Activated CD4-positive, alpha-beta T cell treated with anti-CD3 and anti-CD28 coated beads for 36 hours (primary cell): ENCODE measurements at regions of chr3 and their contacts with region 1.

Region 1: DNA sequence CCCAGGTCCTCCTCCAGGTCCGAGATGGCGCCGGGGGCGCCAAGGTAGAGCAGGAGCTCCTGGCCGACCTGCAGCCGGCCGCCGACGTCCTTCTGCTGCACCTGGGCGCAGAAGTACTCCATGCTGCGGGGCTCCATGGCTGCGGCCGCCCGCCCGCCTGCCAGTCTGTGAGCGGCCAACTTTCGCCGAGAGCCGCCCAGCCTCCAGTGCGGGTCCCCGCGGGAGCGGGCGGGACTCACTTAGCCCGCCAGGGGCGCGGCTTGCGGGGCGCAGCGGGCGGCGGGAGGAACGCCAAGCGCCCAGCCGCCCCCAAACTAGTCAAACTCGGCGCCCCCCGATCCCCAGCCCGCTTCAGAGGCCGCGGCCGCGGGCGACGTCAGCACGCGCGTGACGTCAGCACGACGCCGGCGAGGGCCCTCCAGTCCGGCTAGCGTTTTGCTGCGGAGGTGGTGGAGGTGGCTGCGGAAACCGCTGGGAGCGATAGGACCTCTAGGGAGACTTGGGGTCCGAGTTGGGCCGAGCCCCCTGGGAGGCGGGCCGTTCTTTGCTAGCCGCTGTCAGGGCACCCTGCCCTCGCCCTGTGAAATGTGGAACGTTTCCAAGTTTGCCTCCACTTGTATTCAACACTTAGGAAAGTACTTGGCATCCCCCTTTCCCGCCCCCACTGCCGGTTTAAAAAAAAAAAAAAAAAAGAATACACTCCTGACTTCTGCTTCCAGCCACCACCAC is at the start of gene CLASP2:
- DNase-seq: peak; percentile 90
- ATAC-seq: peak; percentile 85
- H3K4me3 Mint-ChIP-seq: no peak within 1 kb of the TSS
- H3K27ac Mint-ChIP-seq: peak within 1 kb of the TSS; percentile 94
- H3K4me1 Mint-ChIP-seq: peaks cover 6% of the 10 kb centered on the region
- H3K27me3 Mint-ChIP-seq: no peaks in the 10 kb centered on the region
- total RNA-seq, gene CLASP2: 45.5 to 68.5 TPM

Region 2: GRCh38 chr3:32960404-32961170 is 757.4 kb before region 1 on chr3:
- CTCF ChIA-PET with region 1: no interaction called
- POLR2A ChIA-PET with region 1: no interaction called
- intact Hi-C with region 1: loop called in 1 of 2 experiments (anchors 10 kb)
- DNase-seq: no peak
- ATAC-seq: peak; percentile 61
- H3K4me3 Mint-ChIP-seq: peak overlapping the region; percentile 8
- H3K27ac Mint-ChIP-seq: peak overlapping the region; percentile 97
- H3K4me1 Mint-ChIP-seq: peaks cover 77% of the 10 kb centered on the region
- H3K27me3 Mint-ChIP-seq: no peaks in the 10 kb centered on the region

Region 3: DNA sequence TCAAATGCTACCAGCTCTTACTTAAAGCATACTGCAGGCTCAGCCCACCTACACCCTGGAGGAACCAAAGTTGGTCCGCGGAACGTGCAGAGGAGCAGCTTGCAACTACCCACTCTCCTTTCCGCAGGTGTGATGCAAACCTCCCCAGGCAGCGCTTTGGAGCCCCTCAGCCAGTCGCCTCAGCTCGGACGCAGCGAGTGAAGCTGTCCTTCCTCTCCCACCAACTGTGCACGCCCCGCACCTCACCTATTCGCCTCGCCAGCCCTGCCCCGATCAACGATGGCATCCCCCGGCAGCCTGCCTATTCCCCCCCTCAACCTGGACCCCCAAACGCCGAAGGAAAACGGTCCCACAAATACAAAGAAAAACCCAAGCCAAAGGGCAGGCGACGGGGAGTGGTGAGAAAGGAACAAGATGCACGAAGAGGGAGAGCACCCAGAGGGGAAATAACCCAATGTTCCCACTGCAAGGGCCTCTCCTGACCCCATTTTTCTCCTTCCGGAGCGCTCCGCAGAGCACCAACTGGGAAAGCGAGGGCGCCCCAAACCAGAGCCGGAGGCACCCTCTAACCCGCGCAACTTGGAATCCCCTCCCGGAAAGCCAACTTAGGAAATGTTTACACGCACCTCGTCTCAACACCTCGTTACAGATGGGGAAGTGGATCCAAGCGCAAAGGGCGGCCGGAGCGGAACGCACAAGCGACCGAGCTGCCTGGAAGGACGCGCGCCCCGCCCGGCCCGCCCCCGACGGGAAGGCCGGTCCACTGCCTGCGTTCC is 621.7 kb before region 1 on chr3:
- CTCF ChIA-PET with region 1: no interaction called
- POLR2A ChIA-PET with region 1: no interaction called
- intact Hi-C with region 1: loop called in 1 of 2 experiments (anchors 5 kb)
- DNase-seq: peak; percentile 66
- ATAC-seq: peak; percentile 46
- H3K4me3 Mint-ChIP-seq: peak overlapping the region; percentile 99
- H3K27ac Mint-ChIP-seq: peak overlapping the region; percentile 92
- H3K4me1 Mint-ChIP-seq: peaks cover 40% of the 10 kb centered on the region
- H3K27me3 Mint-ChIP-seq: no peaks in the 10 kb centered on the region

Region 4: DNA sequence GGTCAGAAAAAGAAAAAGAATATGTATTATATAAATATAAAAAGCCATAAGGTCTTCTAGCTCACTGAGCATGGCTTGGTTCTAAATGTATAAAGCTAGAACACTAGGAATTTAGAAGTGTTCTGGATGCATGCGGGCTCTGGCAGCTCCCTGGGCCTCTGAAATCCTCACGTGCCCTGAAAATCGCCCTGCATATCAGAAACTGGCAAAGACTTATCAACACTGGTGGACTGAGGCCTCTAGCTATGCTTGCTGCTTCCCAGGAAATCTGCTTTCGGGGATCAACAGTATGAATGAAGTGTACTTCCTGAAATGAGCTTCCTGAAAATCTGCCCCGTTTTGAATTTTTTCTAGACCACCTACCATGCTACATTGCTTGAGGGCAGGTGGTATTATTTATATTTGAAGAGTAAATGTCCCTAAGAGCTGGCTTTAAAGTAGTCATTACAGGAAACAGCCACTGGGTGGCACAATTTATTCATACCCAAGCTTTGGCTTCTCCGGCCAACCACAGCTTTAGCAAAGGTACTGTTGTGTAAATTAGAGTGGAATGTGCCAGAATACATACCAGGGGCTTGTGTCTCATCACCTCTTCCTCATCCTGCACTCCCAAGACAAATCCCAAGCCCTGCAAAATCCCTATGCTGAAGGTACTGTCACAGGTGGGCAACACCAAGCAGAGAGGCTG is 586.6 kb before region 1 on chr3:
- CTCF ChIA-PET with region 1: no interaction called
- POLR2A ChIA-PET with region 1: no interaction called
- intact Hi-C with region 1: loop called in 1 of 2 experiments (anchors 5 kb)
- DNase-seq: peak; percentile 54
- ATAC-seq: peak; percentile 63
- H3K4me3 Mint-ChIP-seq: no peak overlapping the region
- H3K27ac Mint-ChIP-seq: no peak overlapping the region
- H3K4me1 Mint-ChIP-seq: peaks cover 10% of the 10 kb centered on the region
- H3K27me3 Mint-ChIP-seq: no peaks in the 10 kb centered on the region

Region 5: DNA sequence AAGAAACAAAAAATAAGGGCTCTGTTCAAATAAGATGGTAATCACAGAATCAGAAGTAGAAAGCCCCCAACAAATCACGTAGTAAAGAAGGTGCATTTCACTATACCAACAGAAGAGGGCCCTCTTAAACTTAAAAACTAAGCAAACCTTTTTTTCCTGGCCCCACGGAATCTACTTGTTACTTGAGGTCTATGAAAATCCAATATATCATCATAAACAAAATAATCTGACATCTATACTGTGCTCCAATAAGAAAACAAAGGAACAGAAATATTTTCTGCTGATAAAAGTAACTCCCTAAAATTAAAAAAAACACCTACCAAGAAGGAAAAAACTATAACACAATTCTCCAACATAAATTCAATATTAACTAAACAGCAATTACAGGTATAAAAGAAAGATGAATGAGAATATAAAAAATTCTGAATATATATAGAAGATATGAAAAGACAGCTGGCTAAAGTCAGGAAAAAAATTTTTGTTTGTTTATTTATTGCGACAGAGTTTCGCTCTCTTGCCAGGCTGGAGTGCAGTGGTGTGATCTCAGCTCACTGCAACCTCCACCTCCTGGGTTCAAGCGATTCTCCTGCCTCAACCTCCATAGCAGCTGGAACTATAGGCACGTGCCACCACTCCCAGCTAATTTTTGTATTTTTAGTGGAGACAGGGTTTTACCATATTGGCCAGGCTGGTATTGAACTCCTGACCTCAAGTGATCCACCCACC is 81.7 kb before region 1 on chr3:
- CTCF ChIA-PET with region 1: interaction called, 6 read pairs
- POLR2A ChIA-PET with region 1: no interaction called
- intact Hi-C with region 1: loop called (anchors 1 kb)
- DNase-seq: no peak
- ATAC-seq: no peak
- H3K4me3 Mint-ChIP-seq: no peak overlapping the region
- H3K27ac Mint-ChIP-seq: no peak overlapping the region
- H3K4me1 Mint-ChIP-seq: no peaks in the 10 kb centered on the region
- H3K27me3 Mint-ChIP-seq: no peaks in the 10 kb centered on the region

Region 6: DNA sequence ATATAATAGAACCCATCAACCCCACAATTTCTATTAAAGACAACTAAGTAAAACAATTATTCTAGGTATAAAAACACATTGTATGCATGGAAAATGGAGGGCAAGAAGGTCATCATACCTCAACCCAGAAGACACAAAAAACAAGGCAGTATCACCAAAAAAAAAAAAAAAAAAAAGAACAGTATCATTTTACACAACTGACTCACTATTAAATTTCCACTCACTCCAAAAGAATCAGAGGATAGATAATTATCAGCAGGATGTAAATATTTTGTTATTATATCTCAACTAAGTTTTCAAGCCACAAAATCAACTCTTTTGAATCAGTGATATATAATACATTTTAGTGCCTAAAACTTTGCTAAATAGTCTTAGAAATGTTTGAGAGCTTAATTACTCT is 55.0 kb before region 1 on chr3:
- CTCF ChIA-PET with region 1: no interaction called
- POLR2A ChIA-PET with region 1: no interaction called
- intact Hi-C with region 1: no loop called
- DNase-seq: no peak
- ATAC-seq: no peak
- H3K4me3 Mint-ChIP-seq: no peak overlapping the region
- H3K27ac Mint-ChIP-seq: no peak overlapping the region
- H3K4me1 Mint-ChIP-seq: peaks cover 30% of the 10 kb centered on the region
- H3K27me3 Mint-ChIP-seq: no peaks in the 10 kb centered on the region

Region 7: GRCh38 chr3:33787328-33788009 is 69.4 kb after region 1 on chr3:
- CTCF ChIA-PET with region 1: interaction called, 3 read pairs
- POLR2A ChIA-PET with region 1: no interaction called
- intact Hi-C with region 1: loop called in 1 of 2 experiments (anchors 2 kb)
- DNase-seq: peak; percentile 72
- ATAC-seq: peak; percentile 87
- H3K4me3 Mint-ChIP-seq: peak overlapping the region; percentile 36
- H3K27ac Mint-ChIP-seq: no peak overlapping the region
- H3K4me1 Mint-ChIP-seq: peaks cover 7% of the 10 kb centered on the region
- H3K27me3 Mint-ChIP-seq: peaks cover 6% of the 10 kb centered on the region

Region 8: DNA sequence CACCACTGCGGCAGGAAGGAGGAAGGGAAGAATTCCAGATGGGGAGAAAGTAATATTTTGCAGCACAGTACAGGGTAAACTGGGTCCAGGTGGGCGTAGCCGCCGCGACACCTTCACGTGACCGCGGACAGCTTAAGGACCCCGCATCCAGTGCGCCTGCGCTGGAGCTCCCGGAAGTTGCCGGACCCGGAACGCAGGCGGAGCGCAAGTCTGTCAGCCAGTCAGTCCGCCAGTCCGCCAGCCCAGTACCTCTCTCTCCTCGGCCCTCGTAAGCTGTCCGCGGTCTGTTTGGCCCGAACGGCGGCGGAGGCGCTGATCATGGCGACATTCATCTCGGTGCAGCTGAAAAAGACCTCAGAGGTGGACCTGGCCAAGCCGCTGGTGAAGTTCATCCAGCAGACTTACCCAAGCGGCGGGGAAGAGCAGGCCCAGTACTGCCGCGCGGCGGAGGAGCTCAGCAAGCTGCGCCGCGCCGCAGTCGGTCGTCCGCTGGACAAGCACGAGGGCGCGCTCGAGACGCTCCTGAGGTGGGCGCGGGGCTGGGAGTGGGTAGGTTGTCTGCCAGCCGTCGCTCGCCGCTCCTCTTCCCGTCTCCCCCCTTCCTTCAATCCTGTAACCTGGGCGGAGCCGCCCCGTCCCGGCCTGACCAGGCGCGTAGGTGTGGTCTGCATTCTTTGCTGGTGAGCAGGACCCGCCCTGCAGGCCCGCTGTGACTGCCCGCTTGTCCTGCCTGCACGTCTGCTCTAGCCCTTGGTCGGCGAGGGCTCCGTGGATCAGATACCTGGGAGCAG is 80.6 kb after region 1 on chr3 and contains the start of gene PDCD6IP:
- CTCF ChIA-PET with region 1: interaction called, 3 read pairs
- POLR2A ChIA-PET with region 1: no interaction called
- intact Hi-C with region 1: loop called in 1 of 2 experiments (anchors 1 kb)
- DNase-seq: peak; percentile 93
- ATAC-seq: peak; percentile 88
- H3K4me3 Mint-ChIP-seq: peak within 1 kb of the TSS; percentile 82
- H3K27ac Mint-ChIP-seq: peak within 1 kb of the TSS; percentile 95
- H3K4me1 Mint-ChIP-seq: peaks cover 51% of the 10 kb centered on the region
- H3K27me3 Mint-ChIP-seq: no peaks in the 10 kb centered on the region
- total RNA-seq, gene PDCD6IP: 141 to 150 TPM